Right lobe of liver (tissue), 6 donors: ENCODE measurements at regions of chr2 and their contacts with region 1.

Region 1: DNA sequence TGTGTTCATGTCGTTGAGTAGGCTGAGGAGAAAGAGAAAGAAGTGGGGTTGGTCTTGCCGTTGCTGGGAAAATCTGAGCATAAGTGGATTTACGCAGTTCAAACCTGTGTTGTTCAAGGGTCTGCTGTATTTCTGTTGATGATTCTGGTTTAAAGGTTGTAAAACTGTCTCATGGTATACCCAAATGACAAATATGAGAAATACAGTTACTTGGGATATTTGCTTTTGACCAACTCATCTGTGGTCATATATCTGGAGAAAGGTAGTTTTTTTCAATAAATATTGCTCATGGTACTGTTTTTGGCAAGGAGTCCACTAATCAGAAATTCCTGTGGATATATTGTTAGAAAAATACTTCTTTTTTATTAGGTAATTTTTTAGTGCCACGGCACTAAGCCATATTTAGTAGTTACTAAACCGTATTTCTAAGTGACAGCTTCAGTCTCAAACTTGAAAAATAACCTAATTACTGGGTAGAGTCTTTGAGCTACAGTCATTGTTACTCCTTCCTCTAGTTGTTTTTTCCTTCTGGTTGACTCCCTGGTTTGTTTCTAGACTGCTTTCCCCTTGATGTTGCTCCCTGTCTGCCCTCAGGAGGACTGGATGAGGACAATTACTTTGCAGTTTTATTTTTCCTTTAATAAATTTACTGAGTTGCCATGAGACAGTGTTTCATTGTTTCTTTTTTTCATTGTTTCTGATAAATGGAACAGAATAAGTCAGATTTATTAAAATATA is 31.5 kb downstream of the MOB4 start:
- DNase-seq: no peak
- ATAC-seq: no peak
- H3K4me3 ChIP-seq: no peak overlapping the region
- H3K27ac ChIP-seq: no peak overlapping the region
- H3K4me1 ChIP-seq: no peaks in the 10 kb centered on the region
- H3K27me3 ChIP-seq: no peaks in the 10 kb centered on the region
- CTCF ChIP-seq: no peak
- POLR2A ChIP-seq: no peak

Region 2: DNA sequence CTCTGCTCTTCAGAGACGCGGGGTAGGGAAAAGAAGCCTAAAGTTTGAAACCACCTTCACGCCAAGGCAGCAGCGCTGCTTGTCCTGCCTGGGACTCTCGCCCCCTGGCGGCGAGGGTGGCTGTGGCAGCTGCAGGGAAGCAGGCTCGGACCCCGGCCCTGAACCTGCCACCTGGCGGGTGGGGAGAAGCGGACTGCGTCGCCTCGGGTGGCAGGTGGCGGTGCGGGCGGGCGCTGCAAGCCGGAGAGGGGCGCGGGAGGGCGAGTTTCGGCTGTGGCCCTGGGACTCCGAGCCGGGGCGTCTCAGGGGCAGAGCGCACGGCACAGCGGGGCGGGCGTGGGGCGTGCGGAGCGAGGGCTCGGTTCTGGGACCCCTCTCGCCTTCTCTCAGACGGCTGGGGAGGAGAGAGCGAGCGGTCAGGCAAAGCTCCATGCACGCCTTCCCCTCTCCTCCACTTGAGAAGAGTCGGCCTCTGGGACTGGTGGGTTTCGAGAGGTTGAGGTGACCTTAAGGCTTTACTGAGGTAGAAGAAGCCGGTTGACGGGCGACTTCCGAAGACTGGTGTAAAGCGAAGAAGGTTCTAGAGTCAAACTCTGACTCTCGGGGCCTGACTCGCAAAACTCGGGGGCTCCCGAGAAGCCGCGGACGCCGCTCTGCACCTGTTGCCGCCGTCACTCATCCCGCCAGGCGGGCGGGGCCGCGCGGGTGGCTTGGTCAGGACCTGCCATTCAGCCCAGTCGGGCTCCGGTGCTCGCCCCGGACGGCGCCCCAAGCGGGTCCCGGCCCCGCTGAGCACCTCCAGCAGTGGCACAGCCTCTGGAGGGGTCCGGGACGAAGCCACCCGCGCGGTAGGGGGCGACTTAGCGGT is 238.9 kb after region 1 on chr2:
- intact Hi-C with region 1: loop called in 1 of 2 experiments (anchors 10 kb)
- DNase-seq: peak in 1 of 3 donors; percentile 58
- ATAC-seq: peak in 3 of 4 donors; percentile 41 to 46 (median 44)
- H3K4me3 ChIP-seq: peak overlapping the region in 2 of 3 donors; percentile 16 to 35
- H3K27ac ChIP-seq: no peak overlapping the region
- H3K4me1 ChIP-seq: peaks cover 0 to 7% (median 0%) of the 10 kb centered on the region in 4 donors
- H3K27me3 ChIP-seq: peaks cover 0 to 17% of the 10 kb centered on the region in 2 donors
- CTCF ChIP-seq: peak in 3 of 4 donors; percentile 17 to 45 (median 32)
- POLR2A ChIP-seq: no peak